Vagina (tissue), 2 donors: ENCODE measurements at regions of chr11 and their contacts with region 1.

Region 1: DNA sequence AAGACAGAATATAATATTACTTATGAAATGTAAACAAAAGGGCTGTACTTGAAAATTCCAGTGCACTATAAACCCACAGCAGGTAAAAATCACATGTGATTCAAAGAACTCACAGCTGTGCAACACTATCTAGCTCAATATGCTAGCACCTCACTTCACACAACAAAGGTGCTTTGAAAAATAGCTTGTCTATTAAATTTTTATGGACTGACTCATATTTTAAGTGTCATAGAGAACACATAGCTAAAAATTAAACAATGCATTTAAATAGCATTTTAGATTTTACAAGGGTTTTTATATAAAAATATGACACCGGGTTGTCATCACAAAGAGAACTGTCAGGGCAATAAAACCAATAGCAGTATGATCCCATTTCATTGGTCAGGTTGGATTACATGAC is 1390.5 kb upstream of the TENM4 start:
- DNase-seq: no peak
- H3K4me3 ChIP-seq: no peak overlapping the region
- H3K27ac ChIP-seq: no peak overlapping the region
- H3K4me1 ChIP-seq: no peaks in the 10 kb centered on the region
- H3K27me3 ChIP-seq: no peaks in the 10 kb centered on the region
- CTCF ChIP-seq: no peak
- POLR2A ChIP-seq: no peak

Region 2: GRCh38 chr11:79007771-79008402 is 1823.5 kb before region 1 on chr11:
- intact Hi-C with region 1: loop called (anchors 5 kb)
- DNase-seq: peak; percentile 44 to 49
- H3K4me3 ChIP-seq: no peak overlapping the region
- H3K27ac ChIP-seq: no peak overlapping the region
- H3K4me1 ChIP-seq: no peaks in the 10 kb centered on the region
- H3K27me3 ChIP-seq: no peaks in the 10 kb centered on the region
- CTCF ChIP-seq: no peak
- POLR2A ChIP-seq: no peak

Region 3: DNA sequence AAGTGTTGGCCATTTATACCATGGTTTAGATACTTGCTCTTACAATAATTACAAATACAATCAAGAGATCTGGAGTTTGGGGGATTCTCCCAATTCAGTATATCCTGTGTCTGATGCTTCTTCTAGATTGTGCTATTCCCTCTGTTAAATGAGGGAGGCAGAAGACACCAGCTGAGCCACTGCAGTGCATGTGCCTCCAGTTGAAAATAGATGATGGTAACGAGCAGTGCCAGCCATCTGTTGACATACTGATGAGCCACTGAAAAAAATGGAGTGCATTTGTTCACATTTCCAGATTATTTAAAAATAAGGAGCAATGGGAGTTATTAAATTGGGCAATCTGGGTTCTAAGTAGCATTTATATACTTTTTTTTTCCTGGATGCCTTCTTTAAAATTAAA is 37.5 kb after region 1 on chr11:
- intact Hi-C with region 1: no loop called
- DNase-seq: no peak
- H3K4me3 ChIP-seq: no peak overlapping the region
- H3K27ac ChIP-seq: no peak overlapping the region
- H3K4me1 ChIP-seq: no peaks in the 10 kb centered on the region
- H3K27me3 ChIP-seq: no peaks in the 10 kb centered on the region
- CTCF ChIP-seq: no peak
- POLR2A ChIP-seq: no peak